ENCODE measurements at regions of chr14 and their contacts with region 1.

Region 1: GRCh38 chr14:81980601-81981306 is 447.1 kb upstream of the SEL1L start:
- DNase-seq: no peak
- ATAC-seq: no peak
- H3K4me3 ChIP-seq: no peak overlapping the region
- H3K27ac ChIP-seq: no peak overlapping the region
- H3K4me1 ChIP-seq: no peaks in the 10 kb centered on the region
- H3K27me3 ChIP-seq: no peaks in the 10 kb centered on the region
- CTCF ChIP-seq: no peak

Region 2: DNA sequence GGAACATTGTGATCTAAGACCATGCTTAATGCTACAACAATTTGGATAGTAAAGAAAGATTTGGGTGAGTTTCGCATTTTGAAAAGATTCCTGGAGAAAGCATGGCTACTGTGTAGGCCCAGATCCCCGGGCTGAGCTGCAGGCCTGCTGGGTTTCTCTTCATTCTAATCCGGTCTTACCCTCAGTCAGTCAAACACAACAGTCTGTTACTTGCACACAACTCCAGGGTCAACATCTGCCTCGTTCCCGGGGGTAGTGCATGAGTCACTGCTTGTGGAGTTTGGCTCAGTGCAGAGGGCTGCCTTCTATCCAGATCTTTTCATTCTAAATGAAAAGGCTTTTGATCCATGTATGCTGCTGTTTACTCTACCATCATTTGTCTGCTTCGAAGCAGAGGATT is 386.7 kb before region 1 on chr14:
- intact Hi-C with region 1: no loop called
- DNase-seq: peak; percentile 16 to 21
- ATAC-seq: peak; percentile 46 to 93 (median 80)
- H3K4me3 ChIP-seq: no peak overlapping the region
- H3K27ac ChIP-seq: peak overlapping the region in 1 of 10 donors; percentile 32
- H3K4me1 ChIP-seq: peaks cover 0 to 5% (median 0%) of the 10 kb centered on the region in 9 donors
- H3K27me3 ChIP-seq: peaks cover 0 to 6% (median 0%) of the 10 kb centered on the region in 7 donors
- CTCF ChIP-seq: no peak

Region 3: DNA sequence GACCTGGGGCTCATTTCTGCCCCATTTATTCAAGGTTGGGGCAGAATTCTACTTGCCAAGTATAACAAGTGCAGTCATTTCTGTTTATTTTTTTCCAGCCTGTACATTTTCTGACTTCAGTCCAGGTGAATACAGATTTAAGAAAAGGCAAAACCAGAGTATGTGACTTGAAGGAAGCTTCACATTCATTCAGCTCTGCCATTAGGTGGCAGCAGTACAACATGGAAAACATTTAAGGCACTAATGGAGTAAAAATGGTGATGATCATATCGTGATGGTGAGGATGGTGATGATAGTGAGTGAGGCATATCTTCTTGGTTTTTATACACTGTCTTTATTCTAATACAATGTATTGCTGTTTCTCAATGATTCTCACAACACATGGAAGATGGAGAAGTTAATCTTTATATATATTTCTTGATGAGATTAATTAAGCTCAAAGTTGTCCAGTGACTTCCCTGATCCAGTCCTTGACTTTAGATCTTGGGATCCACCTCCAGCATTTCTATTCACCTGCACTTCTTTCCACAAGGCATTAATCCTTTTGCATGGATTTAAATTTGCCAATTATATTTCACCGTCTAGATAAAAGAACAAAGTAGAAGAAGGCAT is 270.4 kb before region 1 on chr14:
- intact Hi-C with region 1: loop called in 1 of 10 experiments (anchors 10 kb)
- DNase-seq: peak in 1 of 2 donors; percentile 8
- ATAC-seq: peak in 1 of 8 donors; percentile 57
- H3K4me3 ChIP-seq: no peak overlapping the region
- H3K27ac ChIP-seq: no peak overlapping the region
- H3K4me1 ChIP-seq: no peaks in the 10 kb centered on the region
- H3K27me3 ChIP-seq: peaks cover 0 to 4% (median 0%) of the 10 kb centered on the region in 7 donors
- CTCF ChIP-seq: peak; percentile 18 to 72 (median 63)

Region 4: DNA sequence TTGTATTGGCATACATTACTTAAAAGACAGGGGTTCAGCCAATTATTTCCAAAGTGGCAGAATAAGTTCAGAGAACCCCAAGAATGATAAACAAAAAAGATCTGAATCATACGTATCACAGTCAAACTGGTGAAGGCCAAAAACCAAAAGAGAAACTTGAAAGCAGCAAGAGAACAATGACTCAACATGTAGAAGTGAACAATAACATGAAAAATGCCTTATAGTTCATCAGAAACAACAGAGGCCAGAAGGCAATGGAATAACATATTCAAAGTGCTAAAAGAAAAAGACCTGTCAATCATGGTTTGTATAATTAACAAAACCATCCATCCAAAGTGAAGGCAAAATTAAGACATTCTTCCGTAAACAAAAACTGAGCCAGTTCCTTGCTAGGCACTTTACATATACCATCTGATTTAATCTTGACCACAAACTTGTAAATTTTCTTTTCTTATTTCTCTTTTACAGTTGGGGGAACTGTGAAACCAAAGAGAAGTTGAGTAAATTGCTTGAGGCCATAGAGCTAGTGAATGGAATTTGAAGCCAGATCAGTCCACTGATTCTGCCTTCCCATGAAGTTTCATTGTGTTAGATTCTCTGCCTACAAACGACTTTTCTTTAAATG is 215.0 kb before region 1 on chr14:
- intact Hi-C with region 1: no loop called
- DNase-seq: no peak
- ATAC-seq: no peak
- H3K4me3 ChIP-seq: no peak overlapping the region
- H3K27ac ChIP-seq: peak overlapping the region in 1 of 10 donors; percentile 37
- H3K4me1 ChIP-seq: peaks cover 0 to 26% (median 0%) of the 10 kb centered on the region in 9 donors
- H3K27me3 ChIP-seq: no peaks in the 10 kb centered on the region
- CTCF ChIP-seq: no peak

Region 5: GRCh38 chr14:81940651-81941050 is 40.1 kb before region 1 on chr14:
- intact Hi-C with region 1: loop called in 1 of 10 experiments (anchors 1 kb)
- DNase-seq: no peak
- ATAC-seq: no peak
- H3K4me3 ChIP-seq: no peak overlapping the region
- H3K27ac ChIP-seq: no peak overlapping the region
- H3K4me1 ChIP-seq: no peaks in the 10 kb centered on the region
- H3K27me3 ChIP-seq: peaks cover 0 to 3% (median 0%) of the 10 kb centered on the region in 7 donors
- CTCF ChIP-seq: no peak

Region 6: DNA sequence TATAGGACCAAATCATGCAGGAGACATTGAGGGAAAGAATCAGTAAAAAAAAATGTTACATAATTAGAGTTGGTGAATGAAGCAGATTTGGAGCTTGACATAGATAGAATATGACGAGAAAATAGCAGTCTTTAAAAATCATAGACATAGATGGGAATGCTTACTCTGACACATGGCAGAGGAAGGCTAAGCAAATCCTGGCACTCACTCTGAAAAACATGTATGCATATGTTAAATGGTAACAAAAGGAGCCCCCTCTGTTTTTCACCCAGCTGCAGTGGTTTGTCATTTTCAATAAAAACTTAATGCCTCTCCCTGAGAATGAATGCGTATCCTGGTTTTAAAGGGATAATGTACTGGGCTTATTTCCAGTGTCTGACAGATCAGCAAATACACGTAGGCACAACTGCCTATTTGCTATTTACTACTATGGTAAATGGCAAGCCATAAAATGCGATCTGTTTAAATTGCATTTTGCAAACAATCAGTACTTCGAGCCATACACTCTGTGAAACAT is 114.1 kb after region 1 on chr14:
- intact Hi-C with region 1: no loop called
- DNase-seq: no peak
- ATAC-seq: no peak
- H3K4me3 ChIP-seq: no peak overlapping the region
- H3K27ac ChIP-seq: no peak overlapping the region
- H3K4me1 ChIP-seq: no peaks in the 10 kb centered on the region
- H3K27me3 ChIP-seq: peaks cover 0 to 4% (median 0%) of the 10 kb centered on the region in 7 donors
- CTCF ChIP-seq: no peak